Mucosa of descending colon (tissue), 3 donors: ENCODE measurements at regions of chr4 and their contacts with region 1.

Region 1: DNA sequence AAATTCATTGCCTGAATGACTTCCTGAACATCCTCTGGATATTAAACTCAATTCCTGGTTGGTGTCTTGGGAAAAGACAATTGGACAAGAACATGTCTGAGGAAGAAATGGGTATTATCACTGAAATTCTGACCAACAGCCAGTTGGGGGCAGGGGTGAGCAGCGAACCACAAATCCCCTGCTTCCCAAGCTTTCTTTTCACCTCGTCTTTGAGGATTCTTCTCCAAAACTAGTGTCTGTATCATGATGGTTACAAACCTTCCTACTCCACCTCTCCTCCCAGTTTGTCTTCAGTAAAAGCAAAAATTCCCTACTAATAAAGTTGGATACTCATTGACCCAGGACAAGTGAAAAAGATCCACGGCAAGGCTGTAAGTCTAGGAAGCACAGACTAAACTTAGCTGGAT is 48.3 kb upstream of the WDR1 start:
- DNase-seq: peak in 2 of 3 donors; percentile 48 to 61
- ATAC-seq: peak; percentile 40
- H3K4me3 ChIP-seq: no peak overlapping the region
- H3K4me1 ChIP-seq: peaks cover 15% of the 10 kb centered on the region
- CTCF ChIP-seq: no peak

Region 2: DNA sequence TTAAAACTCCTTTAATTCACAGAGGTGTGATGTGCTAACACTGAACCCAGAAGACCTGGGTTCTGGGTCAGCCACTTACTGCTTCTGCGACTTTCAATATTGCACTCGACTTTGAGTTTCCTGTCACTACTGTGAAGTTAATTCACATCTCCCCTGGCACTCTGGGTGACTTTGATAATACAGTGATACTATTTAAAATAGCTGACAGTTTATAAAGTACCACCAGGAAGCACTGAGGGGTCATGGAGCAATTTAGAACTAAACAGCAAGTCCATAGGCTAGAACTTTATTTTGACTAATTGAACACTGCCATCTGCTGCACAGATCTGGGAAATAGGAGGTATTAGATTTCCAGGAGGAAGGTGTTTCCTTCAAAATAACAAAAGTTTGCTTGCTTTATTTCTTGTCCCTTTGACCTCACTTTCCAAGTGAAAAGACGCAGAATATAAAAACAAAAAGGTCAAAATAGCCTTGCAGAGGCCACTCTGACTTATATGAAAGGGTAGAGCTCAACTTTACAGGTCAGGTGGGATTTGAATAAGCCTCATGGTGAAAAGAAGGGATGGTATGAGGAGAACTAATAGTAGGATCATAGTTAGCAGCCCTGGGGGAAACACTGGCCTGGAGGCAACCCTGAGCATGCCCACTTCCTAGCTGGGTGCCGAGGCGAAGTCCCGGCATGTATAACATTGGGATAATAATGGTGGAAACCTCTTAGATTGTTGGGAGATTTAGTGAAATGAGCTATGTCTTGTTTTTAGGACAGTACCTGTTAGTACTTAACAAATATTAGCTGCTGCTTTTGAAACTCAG is 239.0 kb after region 1 on chr4:
- intact Hi-C with region 1: loop called in 1 of 2 experiments (anchors 2 kb)
- DNase-seq: peak in 1 of 3 donors; percentile 73
- ATAC-seq: peak; percentile 51
- H3K4me3 ChIP-seq: no peak overlapping the region
- H3K4me1 ChIP-seq: no peaks in the 10 kb centered on the region
- CTCF ChIP-seq: no peak

Region 3: DNA sequence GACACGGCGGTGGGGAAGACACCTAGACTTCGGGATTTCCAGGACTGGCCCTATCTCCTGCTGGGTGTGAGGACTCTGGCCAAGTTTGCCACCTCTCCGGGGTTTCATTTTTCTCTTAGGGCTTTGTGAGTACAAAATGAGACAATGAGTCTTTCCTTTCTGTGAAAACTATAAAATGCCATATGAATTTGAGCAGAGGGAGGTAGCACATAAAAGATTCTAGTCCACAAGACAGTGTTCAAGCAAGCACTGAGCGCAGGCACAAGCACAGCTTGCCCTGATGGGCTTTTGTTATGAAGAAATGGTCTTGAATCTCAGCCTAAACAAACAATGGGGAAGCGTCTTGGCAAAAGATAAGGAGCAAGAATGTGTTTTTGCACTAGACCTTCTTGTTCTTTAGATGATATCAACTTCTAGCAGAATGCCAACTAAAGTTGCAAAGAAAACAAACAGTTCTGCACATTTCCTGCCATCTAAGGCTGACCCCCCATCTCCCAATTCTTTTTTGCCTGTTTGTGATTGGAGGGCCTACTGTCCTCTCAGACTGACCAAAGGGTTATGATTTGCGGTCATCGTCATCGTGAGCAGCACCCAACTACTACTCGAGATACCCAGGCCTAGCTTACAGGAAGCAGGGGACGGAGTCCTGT is 365.4 kb after region 1 on chr4:
- intact Hi-C with region 1: loop called in 1 of 2 experiments (anchors 10 kb)
- DNase-seq: no peak
- ATAC-seq: no peak
- H3K4me3 ChIP-seq: no peak overlapping the region
- H3K4me1 ChIP-seq: no peaks in the 10 kb centered on the region
- CTCF ChIP-seq: no peak